AG04449 (cell line): ENCODE measurements at regions of chr1 and their contacts with region 1.

Region 1: DNA sequence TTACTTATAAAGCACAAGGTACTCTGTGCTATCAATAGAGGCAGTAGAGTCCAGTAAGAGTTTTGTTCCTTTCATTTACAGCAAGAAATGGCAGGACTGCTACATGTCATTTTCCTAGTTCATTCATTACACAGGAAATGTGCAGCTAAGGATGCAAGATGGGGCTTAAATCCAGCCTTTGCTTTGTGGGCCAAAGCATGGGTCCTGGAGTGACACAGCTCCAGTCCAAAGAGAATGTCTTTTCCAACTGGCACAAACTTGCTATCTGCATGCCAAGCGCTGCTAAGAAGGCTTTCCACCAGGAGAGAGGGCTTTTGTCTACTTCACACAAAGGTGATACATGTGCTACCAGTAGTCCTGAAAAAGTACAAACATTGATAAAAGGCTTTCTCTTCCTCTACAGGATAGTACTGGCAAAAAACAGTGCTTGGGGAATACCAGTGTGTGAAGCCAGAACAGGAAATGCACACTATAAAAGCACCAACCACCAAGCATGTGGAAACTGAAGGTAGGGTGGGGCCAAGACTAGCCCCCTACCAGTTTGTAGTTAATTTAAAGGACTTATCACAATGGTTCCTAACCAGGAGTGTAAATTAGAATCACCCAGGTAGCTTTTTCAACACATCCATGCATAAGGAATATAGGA is 68.7 kb downstream of the ARID4B start:
- DNase-seq: no peak
- H3K4me3 ChIP-seq: no peak overlapping the region
- CTCF ChIP-seq: no peak

Region 2: GRCh38 chr1:235270625-235271024 is 11.4 kb after region 1 on chr1:
- CTCF ChIA-PET with region 1: interaction called, 12 read pairs
- POLR2A ChIA-PET with region 1: no interaction called
- DNase-seq: no peak
- H3K4me3 ChIP-seq: no peak overlapping the region
- CTCF ChIP-seq: no peak